ENCODE measurements at regions of chr10 and their contacts with region 1.

Region 1: DNA sequence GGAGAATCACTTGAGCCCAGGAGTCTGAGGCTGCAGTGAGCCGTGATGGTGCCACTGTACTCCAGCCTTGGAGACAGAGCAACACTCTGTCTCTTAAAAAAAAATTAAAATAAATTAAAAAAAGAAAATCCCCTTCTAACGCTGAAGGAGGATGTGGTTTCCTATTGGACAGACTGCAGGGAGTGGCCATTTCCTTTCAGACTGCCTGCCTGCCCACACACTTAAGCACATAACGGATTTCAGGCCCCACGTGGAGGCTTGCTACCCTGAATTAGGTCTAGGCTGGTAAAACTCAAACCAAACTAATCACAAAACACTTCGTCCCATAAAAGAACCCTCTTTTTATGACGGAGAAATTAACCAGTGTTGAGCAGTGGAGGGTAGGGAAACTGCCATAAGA is 34.0 kb downstream of the GATA3 start:
- DNase-seq: peak; percentile 65
- H3K4me3 Mint-ChIP-seq: no peak overlapping the region
- H3K27ac Mint-ChIP-seq: no peak overlapping the region
- H3K4me1 Mint-ChIP-seq: peaks cover 18% of the 10 kb centered on the region
- H3K27me3 Mint-ChIP-seq: no peaks in the 10 kb centered on the region

Region 2: GRCh38 chr10:8065651-8066050 is 22.9 kb before region 1 on chr10:
- CTCF ChIA-PET with region 1: no interaction called
- POLR2A ChIA-PET with region 1: no interaction called
- intact Hi-C with region 1: loop called (anchors 2 kb)
- DNase-seq: no peak
- H3K4me3 Mint-ChIP-seq: peak overlapping the region; percentile 54
- H3K27ac Mint-ChIP-seq: peak overlapping the region; percentile 91
- H3K4me1 Mint-ChIP-seq: peaks cover 96% of the 10 kb centered on the region
- H3K27me3 Mint-ChIP-seq: no peaks in the 10 kb centered on the region